HEK293 (cell line): ENCODE measurements at regions of chr20 and their contacts with region 1.

Region 1: GRCh38 chr20:13819885-13820645 is 35.2 kb downstream of the NDUFAF5 start:
- H3K4me3 ChIP-seq: no peak overlapping the region
- H3K27ac ChIP-seq: no peak overlapping the region
- H3K4me1 ChIP-seq: no peaks in the 10 kb centered on the region
- CTCF ChIP-seq: no peak

Region 2: GRCh38 chr20:13670160-13670559 is 149.9 kb before region 1 on chr20:
- CTCF ChIA-PET with region 1: no interaction called
- POLR2A ChIA-PET with region 1: no interaction called
- H3K4me3 ChIP-seq: no peak overlapping the region
- H3K27ac ChIP-seq: no peak overlapping the region
- H3K4me1 ChIP-seq: no peaks in the 10 kb centered on the region
- CTCF ChIP-seq: no peak

Region 3: DNA sequence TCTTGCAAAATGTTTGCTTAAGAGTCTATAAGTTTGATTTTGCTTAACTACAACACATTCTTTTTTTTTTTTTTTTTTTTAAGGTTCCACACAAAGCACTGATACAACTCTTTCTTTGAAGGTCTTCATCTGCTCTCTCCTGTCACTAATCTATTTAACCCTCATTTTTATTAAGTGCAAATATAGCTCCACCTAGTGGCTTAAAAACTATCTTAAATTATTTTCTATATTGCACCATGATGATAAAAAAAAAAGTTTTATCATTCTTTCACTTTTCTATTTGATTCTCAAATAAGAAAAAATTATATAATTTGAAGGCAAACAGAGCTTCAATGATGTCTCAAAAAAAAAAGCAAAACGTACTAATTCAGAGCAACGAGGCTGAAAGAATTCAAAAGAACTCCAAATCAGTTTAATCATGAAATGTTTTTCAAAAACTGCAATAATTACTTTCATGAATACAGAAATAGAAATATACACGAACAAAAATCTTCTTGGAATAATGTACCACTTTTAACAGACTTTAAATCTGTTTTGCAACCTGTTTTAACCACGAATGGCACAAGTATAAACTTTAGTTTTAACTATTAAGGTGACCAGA is 48.1 kb before region 1 on chr20:
- CTCF ChIA-PET with region 1: interaction called, 10 read pairs
- POLR2A ChIA-PET with region 1: no interaction called
- H3K4me3 ChIP-seq: no peak overlapping the region
- H3K27ac ChIP-seq: no peak overlapping the region
- H3K4me1 ChIP-seq: no peaks in the 10 kb centered on the region
- CTCF ChIP-seq: no peak

Region 4: DNA sequence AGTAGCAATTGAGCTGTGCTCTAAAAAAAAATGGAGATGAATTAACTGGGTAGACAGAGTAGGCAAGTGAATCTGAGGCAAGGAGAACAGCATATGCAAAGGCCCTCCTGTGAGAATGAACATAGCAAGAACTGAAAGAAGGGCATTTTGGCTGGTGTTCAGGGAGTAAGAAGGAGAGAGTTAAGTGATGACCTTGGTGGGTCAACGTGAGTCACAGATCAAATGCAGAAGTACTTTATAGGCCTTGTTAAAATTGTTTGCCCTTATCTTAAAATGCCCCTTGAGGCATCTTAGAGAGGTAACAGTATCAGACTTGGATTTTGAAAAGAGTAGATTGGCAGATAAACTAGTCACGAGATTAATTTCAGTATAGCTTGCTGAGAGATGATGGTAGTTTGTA is 10.7 kb before region 1 on chr20:
- CTCF ChIA-PET with region 1: interaction called, 10 read pairs
- POLR2A ChIA-PET with region 1: no interaction called
- H3K4me3 ChIP-seq: no peak overlapping the region
- H3K27ac ChIP-seq: no peak overlapping the region
- H3K4me1 ChIP-seq: no peaks in the 10 kb centered on the region
- CTCF ChIP-seq: no peak

Region 5: GRCh38 chr20:13915284-13915683 is 95.2 kb after region 1 on chr20:
- CTCF ChIA-PET with region 1: interaction called, 11 read pairs
- POLR2A ChIA-PET with region 1: no interaction called
- H3K4me3 ChIP-seq: no peak overlapping the region
- H3K27ac ChIP-seq: no peak overlapping the region
- H3K4me1 ChIP-seq: no peaks in the 10 kb centered on the region
- CTCF ChIP-seq: no peak

Region 6: DNA sequence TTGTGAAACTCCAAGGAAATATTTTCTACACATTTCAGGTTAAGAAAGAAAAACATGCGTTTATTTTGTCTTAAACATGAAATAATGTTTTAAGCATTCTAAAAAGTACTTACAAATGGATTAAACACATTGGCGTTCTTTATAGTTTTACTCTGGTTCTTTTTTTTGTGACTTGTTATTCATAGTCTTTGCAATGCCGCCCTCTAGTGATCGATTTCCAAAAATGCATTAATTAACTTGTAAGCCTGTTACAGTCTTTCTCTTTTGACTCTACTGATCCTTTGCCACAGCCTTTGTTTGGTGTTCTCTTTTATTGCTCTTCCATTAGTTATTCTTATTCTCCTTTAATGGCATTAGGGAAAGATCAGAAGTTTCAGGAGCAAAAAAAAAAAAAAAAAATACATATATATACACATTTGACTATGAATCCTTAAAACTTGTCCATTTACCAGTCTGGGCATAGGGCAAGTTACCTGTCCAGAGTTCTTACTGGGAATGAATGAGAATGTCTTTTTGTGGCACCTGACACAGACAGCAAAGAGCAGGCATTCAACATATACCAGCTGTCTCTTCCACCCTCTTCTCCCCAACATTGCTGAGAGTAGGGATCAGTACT is 235.2 kb after region 1 on chr20:
- CTCF ChIA-PET with region 1: interaction called, 63 read pairs
- POLR2A ChIA-PET with region 1: no interaction called
- H3K4me3 ChIP-seq: no peak overlapping the region
- H3K27ac ChIP-seq: no peak overlapping the region
- H3K4me1 ChIP-seq: no peaks in the 10 kb centered on the region
- CTCF ChIP-seq: peak; percentile 22; the same call in 1 of the 2 replicates